ENCODE measurements at regions of chrX and their contacts with region 1.

Region 1: DNA sequence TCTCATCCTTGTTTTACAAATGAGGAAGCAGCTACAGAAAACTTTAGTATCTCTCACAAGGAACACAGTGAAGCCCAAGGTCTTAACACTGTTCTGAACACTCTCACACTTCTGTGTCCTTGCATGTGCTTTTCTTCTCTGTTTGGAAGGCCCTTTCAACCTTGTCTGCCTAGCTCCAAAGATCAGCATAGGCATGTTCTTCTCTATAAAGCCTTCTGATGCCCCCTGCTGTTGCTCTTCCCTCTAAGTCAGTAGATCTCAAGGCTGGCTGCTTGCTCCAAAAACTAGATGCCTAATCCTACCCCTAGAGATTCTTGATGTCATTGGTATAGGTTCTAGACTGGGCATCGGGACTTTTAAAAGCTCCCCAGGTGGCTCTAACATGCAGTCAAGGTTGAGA is 5.9 kb downstream of the APOO start:
- DNase-seq: peak; percentile 60
- CTCF ChIP-seq: peak; percentile 24

Region 2: GRCh38 chrX:23525531-23525930 is 376.3 kb before region 1 on chrX:
- in situ Hi-C with region 1: no loop called
- DNase-seq: no peak
- CTCF ChIP-seq: no peak

Region 3: GRCh38 chrX:23694606-23695005 is 207.2 kb before region 1 on chrX:
- in situ Hi-C with region 1: loop called (anchors 5 kb)
- DNase-seq: peak; percentile 68
- CTCF ChIP-seq: peak; percentile 66

Region 4: GRCh38 chrX:24574743-24575142 is 672.9 kb after region 1 on chrX:
- in situ Hi-C with region 1: no loop called
- DNase-seq: no peak
- CTCF ChIP-seq: no peak